ENCODE measurements at regions of chr1 and their contacts with region 1.

Region 1: DNA sequence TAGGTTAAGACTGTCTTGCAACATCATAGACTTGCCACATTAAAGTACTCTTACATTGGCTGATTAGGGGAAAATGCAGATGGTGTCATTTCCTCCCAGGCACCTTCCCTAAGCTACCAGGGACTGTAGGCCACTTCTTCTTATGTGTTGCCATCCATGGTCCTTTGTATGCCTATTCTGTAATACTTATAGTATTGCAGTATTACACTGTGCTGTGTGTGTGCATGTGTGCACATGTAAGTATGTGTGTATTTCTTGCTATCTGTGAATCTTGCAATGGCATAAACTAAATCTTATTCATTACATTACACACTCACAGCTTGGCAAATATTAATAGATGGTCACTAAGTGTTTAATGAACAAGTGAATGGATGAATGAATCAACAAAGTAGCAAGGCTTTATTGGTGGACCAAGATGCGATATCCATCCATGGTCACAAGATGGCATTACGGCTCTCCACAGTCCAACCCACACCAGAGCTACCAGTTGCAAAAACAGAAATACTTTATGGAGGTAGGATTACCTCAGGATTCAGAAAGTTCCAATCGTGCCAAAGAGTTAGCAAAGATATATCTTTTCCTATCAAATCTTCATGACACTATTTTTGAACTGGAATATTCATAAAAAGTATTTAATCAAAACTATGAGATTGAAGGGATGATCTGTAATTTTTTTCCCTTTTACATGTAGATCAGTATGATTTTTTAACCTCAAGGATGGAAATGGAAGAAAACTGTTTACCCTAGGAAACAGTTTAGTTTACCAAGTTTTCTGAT is 160.2 kb downstream of the DENND1B start:
- DNase-seq: peak in 1 of 2 experiments; percentile 45
- H3K4me3 ChIP-seq: no peak overlapping the region
- H3K27ac ChIP-seq: no peak overlapping the region
- H3K4me1 ChIP-seq: no peaks in the 10 kb centered on the region
- H3K27me3 ChIP-seq: no peaks in the 10 kb centered on the region
- CTCF ChIP-seq: peak; percentile 64 to 78 (median 65)
- EP300 ChIP-seq: no peak
- POLR2A ChIP-seq: no peak
- RAD21 ChIP-seq: peak; percentile 91

Region 2: DNA sequence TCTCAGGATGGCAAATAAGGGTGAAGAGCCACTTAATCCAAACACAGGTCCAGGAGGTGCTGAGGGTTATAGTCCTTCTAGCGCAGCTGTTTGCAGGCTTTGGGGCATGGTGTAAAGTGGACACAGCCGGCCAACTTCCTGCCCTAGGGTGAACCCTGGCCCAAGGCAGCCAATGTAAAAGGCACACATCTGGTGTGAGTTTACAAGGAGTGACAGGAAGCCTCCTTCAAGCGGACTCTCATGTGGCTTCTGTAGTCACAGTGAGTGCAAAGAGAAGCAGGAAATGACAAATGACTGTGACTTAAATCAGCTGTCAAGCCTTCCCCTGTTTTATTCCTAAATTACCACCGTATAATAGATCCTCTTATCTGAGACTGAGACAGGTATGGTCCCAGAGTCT is 134.0 kb before region 1 on chr1:
- CTCF ChIA-PET with region 1: no interaction called
- POLR2A ChIA-PET with region 1: no interaction called
- DNase-seq: no peak
- H3K4me3 ChIP-seq: no peak overlapping the region
- H3K27ac ChIP-seq: no peak overlapping the region
- H3K4me1 ChIP-seq: no peaks in the 10 kb centered on the region
- H3K27me3 ChIP-seq: no peaks in the 10 kb centered on the region
- CTCF ChIP-seq: no peak
- EP300 ChIP-seq: no peak
- POLR2A ChIP-seq: no peak
- RAD21 ChIP-seq: no peak

Region 3: DNA sequence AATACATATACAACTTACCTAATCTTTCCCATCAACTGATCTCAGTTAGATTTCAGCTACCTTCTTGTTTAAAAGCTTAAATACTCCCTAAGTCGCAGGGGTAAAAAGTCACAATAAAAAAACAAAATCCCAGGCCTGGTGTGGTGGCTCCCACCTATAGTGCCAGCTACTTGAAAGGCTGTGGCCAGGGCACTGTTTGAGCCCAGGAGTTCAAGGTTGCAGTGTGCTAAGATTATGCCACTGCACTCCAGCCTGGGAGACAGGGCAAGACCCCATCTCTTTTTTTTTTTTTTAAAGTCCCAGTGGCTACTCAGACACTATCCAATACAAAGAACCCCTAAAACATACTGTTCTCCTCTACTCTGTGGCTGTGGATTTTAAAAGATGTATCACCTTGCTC is 68.1 kb before region 1 on chr1:
- CTCF ChIA-PET with region 1: no interaction called
- POLR2A ChIA-PET with region 1: no interaction called
- DNase-seq: no peak
- H3K4me3 ChIP-seq: no peak overlapping the region
- H3K27ac ChIP-seq: no peak overlapping the region
- H3K4me1 ChIP-seq: 0 out of 7 replicates have a peak, but pooled peaks cover 0 to 2% (median 0%) of the 10 kb centered on the region in 4 experiments
- H3K27me3 ChIP-seq: no peaks in the 10 kb centered on the region
- CTCF ChIP-seq: no peak
- EP300 ChIP-seq: no peak
- POLR2A ChIP-seq: no peak
- RAD21 ChIP-seq: no peak

Region 4: GRCh38 chr1:197595304-197595904 is 19.7 kb before region 1 on chr1:
- CTCF ChIA-PET with region 1: no interaction called
- POLR2A ChIA-PET with region 1: no interaction called
- DNase-seq: no peak
- H3K4me3 ChIP-seq: no peak overlapping the region
- H3K27ac ChIP-seq: no peak overlapping the region
- H3K4me1 ChIP-seq: no peaks in the 10 kb centered on the region; a peak in 1 of 7 replicates
- H3K27me3 ChIP-seq: no peaks in the 10 kb centered on the region
- CTCF ChIP-seq: no peak
- EP300 ChIP-seq: no peak
- POLR2A ChIP-seq: no peak
- RAD21 ChIP-seq: no peak

Region 5: DNA sequence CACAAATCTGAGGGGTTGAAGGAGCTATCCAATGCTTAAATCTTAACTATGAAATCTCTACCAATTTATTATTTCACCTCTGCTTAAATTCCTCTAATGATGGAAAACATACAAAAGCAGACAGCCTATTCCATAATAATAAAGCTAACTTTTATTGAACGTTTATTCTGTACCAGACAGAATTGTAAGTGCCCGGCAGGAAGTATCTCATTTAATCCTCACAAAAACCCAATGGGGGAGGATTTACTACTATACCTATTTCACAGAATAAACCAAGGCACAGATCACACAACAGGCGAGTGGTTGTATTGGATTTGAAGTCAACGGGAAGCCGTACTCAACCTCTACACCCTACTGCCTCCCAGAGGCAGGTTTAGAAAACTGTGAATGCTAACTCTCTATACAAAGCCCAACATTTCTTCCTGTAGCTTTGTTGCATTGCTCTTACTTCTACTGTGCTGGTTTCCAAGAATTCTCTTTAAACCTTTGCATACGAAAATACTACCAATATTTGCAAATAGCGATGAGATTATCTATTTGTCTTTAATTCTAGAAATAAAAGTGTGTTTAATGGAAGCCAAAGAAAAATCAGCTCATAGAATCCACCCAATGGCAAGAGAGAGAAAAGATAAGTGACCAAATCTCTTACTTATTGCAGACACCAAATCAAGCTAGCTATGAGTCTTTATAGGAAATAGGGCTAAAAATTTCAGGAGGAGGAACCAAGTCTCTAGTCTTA is 253.8 kb after region 1 on chr1:
- CTCF ChIA-PET with region 1: interaction called, 39 read pairs
- POLR2A ChIA-PET with region 1: no interaction called
- DNase-seq: peak in 1 of 2 experiments; percentile 23
- H3K4me3 ChIP-seq: no peak overlapping the region
- H3K27ac ChIP-seq: no peak overlapping the region
- H3K4me1 ChIP-seq: no peaks in the 10 kb centered on the region; a peak in 1 of 7 replicates
- H3K27me3 ChIP-seq: no peaks in the 10 kb centered on the region
- CTCF ChIP-seq: peak; percentile 7 to 83 (median 82)
- EP300 ChIP-seq: no peak
- POLR2A ChIP-seq: no peak
- RAD21 ChIP-seq: peak; percentile 97 to 99

Region 6: GRCh38 chr1:197902454-197903195 is 287.5 kb after region 1 on chr1 and contains the start of gene C1orf53:
- CTCF ChIA-PET with region 1: interaction called, 10 read pairs
- POLR2A ChIA-PET with region 1: no interaction called
- DNase-seq: peak in 1 of 2 experiments; percentile 91
- H3K4me3 ChIP-seq: peak within 1 kb of the TSS; percentile 48 to 76 (median 61)
- H3K27ac ChIP-seq: peak within 1 kb of the TSS; percentile 73; the same call in 1 of the 2 replicates
- H3K4me1 ChIP-seq: peaks cover 0 to 3% (median 2%) of the 10 kb centered on the region in 4 experiments; a peak in 3 of 7 replicates
- H3K27me3 ChIP-seq: peaks cover 32 to 48% (median 42%) of the 10 kb centered on the region in 4 experiments
- CTCF ChIP-seq: no peak
- EP300 ChIP-seq: no peak
- POLR2A ChIP-seq: peak in 1 of 2 experiments; percentile 74; a peak in 2 of 3 replicates
- RAD21 ChIP-seq: peak in 1 of 2 experiments; percentile 0; a peak in 1 of 4 replicates
- total RNA-seq, gene C1orf53: 0.56 and 0.80 TPM in 2 replicates

Region 7: DNA sequence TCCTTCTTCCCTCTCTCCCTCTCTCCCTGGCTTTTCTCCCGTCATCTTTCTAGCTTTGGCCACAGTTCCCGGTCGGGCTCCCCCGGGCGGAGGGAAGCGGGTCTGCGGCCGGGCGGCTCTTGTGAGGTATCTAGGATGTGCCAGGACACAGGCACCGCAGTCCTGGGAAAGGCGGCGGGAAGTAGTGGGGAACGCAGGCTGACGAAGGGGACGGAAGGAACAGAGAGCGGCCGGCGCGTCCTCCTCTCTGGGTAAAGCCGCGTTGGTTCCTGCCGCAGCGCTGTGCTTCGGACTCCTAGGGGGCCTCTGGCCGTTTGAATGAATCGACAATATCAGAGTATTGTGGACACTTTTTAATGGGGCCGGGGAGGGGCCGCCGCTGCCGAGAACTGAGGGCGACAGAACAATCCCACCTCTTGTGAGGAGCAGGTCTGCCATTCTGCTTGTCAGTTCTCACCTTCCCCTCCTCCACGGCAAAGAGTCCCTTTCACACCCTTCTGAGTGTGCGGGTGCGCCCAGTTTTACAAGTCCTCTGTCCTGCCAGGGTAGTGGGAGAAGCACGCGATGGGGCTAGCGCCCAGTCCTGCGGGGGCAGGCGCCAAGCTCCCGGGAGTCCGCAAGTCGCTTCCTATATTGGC is 300.9 kb after region 1 on chr1:
- CTCF ChIA-PET with region 1: interaction called, 25 read pairs
- POLR2A ChIA-PET with region 1: no interaction called
- DNase-seq: peak in 1 of 2 experiments; percentile 83
- H3K4me3 ChIP-seq: peak overlapping the region; percentile 3 to 55 (median 31); a peak in 6 of 8 replicates
- H3K27ac ChIP-seq: no peak overlapping the region
- H3K4me1 ChIP-seq: peaks cover 15 to 58% (median 32%) of the 10 kb centered on the region in 4 experiments
- H3K27me3 ChIP-seq: peaks cover 98 to 100% (median 99%) of the 10 kb centered on the region in 4 experiments
- CTCF ChIP-seq: peak; percentile 57 to 69 (median 57)
- EP300 ChIP-seq: no peak
- POLR2A ChIP-seq: no peak
- RAD21 ChIP-seq: peak; percentile 52 to 61

Region 8: DNA sequence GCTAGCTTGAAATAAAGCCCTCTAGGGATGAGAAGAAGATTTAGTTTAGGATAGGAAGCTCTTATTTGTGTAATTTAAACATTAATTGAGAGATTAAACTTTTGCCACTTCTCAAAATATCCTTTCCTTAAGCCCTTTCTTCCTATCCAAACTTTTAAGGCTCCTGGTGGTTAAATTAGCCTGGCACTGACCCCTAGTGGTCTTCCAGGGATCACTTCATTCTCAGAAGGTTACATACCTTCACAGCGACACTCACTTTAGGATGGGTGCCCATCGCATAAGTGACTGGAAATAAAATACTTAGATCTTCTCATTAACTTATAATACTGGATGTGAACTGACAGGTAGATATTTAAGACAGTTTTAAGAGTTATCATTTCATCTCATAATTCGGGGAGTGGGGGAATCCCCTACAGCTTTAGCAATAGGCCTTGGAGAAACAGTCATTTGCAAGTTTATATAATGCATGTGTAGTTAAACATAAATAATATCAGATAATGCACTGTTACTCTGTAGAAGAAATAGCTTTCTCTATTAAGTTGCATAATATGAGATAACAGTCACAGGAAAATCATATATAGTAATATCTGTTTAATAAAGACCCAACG is 309.5 kb after region 1 on chr1:
- CTCF ChIA-PET with region 1: interaction called, 62 read pairs
- POLR2A ChIA-PET with region 1: no interaction called
- DNase-seq: no peak
- H3K4me3 ChIP-seq: no peak overlapping the region
- H3K27ac ChIP-seq: no peak overlapping the region
- H3K4me1 ChIP-seq: peaks cover 8 to 17% (median 10%) of the 10 kb centered on the region in 4 experiments
- H3K27me3 ChIP-seq: peaks cover 28 to 40% (median 37%) of the 10 kb centered on the region in 4 experiments
- CTCF ChIP-seq: peak; percentile 9 to 83 (median 75)
- EP300 ChIP-seq: no peak
- POLR2A ChIP-seq: no peak
- RAD21 ChIP-seq: peak; percentile 88 to 90

Measured in H1 (cell line).